Right cardiac atrium (tissue), 5 donors: ENCODE measurements at regions of chr2 and their contacts with region 1.

Region 1: DNA sequence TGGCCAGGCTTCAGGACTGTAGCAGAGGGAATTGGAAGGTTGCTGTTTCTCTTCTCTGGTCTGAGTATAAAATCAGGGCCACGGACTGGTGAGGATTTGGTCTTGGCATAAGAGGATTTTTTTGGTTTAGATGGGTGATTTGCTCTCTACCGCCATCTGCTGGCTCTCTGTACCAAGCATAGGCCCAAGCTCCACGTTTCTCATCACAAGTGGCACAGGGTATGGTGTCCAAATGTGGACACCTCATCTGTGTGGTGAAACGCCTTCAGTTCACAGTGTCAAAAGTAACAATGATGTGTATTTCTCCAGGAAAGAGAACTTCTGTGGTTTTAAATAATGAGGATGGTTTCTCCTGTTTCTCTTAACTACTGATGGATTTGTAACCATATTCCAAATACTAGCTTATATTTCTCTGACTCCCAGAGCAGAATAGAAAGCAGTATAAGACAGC is 115.1 kb downstream of the EML6 start:
- DNase-seq: peak; percentile 63 to 71 (median 68)
- ATAC-seq: peak; percentile 83 to 86
- H3K4me3 ChIP-seq: no peak overlapping the region
- H3K27ac ChIP-seq: no peak overlapping the region
- H3K4me1 ChIP-seq: no peaks in the 10 kb centered on the region
- H3K27me3 ChIP-seq: no peaks in the 10 kb centered on the region

Region 2: DNA sequence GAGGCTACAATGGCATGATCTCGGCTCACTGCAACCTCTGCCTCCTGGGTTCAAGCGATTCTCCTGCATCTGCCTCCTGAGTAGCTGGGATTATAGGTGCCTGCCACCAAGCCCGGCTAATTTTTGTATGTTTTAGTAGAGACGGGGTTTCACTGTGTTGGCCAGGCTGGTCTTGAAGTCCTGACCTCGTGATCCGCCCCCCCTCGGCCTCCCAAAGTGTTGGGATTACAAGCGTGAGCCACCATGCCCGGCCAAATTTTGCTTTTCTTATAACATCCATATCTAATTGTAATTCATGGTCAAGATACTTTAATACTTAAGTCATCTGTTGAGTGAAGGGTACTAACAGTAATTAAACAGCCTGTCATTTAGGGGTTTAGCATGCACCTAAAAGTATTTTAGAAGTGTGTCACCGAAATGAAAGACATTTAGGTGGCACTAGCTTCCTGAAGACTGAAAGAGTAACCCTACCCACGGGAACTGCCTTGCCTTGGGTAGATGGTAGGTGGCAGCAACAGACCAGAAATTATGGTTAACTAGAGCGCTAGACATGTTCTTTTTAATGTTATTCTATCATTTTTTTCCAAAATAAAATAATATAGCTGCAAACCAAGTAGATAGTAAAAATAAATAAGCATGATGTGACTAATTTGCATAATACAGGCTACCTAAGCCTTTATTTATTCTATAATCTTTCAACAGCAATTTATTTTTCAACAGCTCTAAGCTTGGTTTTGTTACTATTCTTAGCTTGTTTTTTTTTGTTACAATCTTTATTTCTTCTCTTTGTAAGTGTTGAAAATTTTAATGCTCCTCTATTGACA is 731.8 kb before region 1 on chr2:
- intact Hi-C with region 1: loop called in 1 of 4 experiments (anchors 5 kb)
- DNase-seq: no peak
- ATAC-seq: peak; percentile 72 to 74
- H3K4me3 ChIP-seq: no peak overlapping the region
- H3K27ac ChIP-seq: no peak overlapping the region
- H3K4me1 ChIP-seq: peaks cover 3% of the 10 kb centered on the region
- H3K27me3 ChIP-seq: no peaks in the 10 kb centered on the region

Region 3: GRCh38 chr2:54606393-54606969 is 232.1 kb before region 1 on chr2:
- intact Hi-C with region 1: no loop called
- DNase-seq: peak in 2 of 3 donors; percentile 34 to 69
- ATAC-seq: peak; percentile 52 to 70
- H3K4me3 ChIP-seq: no peak overlapping the region
- H3K27ac ChIP-seq: peak overlapping the region; percentile 47
- H3K4me1 ChIP-seq: peaks cover 39% of the 10 kb centered on the region
- H3K27me3 ChIP-seq: no peaks in the 10 kb centered on the region

Region 4: GRCh38 chr2:54723131-54723995 is 115.2 kb before region 1 on chr2 and contains the start of gene EML6:
- intact Hi-C with region 1: loop called in 2 of 4 experiments (anchors 10 kb)
- DNase-seq: peak; percentile 99
- ATAC-seq: peak; percentile 100
- H3K4me3 ChIP-seq: peak within 1 kb of the TSS; percentile 80
- H3K27ac ChIP-seq: peak within 1 kb of the TSS; percentile 83
- H3K4me1 ChIP-seq: no peaks in the 10 kb centered on the region
- H3K27me3 ChIP-seq: no peaks in the 10 kb centered on the region
- total RNA-seq, gene EML6: 0.26 to 1.5 (median 0.89) TPM

Region 5: GRCh38 chr2:55296393-55296792 is 457.8 kb after region 1 on chr2:
- intact Hi-C with region 1: no loop called
- DNase-seq: no peak
- ATAC-seq: no peak
- H3K4me3 ChIP-seq: no peak overlapping the region
- H3K27ac ChIP-seq: no peak overlapping the region
- H3K4me1 ChIP-seq: no peaks in the 10 kb centered on the region
- H3K27me3 ChIP-seq: no peaks in the 10 kb centered on the region